Endothelial cell of umbilical vein (primary cell): ENCODE measurements at regions of chr14 and their contacts with region 1.

Region 1: GRCh38 chr14:60980811-60981632 is at the starts of genes SLC38A6 and TRMT5:
- DNase-seq: peak; percentile 98
- H3K4me3 ChIP-seq: peak within 1 kb of the TSS; percentile 27 to 72 (median 61)
- H3K27ac ChIP-seq: peak within 1 kb of the TSS; percentile 83
- H3K4me1 ChIP-seq: peaks cover 46% of the 10 kb centered on the region
- H3K27me3 ChIP-seq: no peaks in the 10 kb centered on the region
- CTCF ChIP-seq: no peak
- POLR2A ChIP-seq: peak; percentile 51
- total RNA-seq, gene SLC38A6: 21.6 and 24.6 TPM in 2 replicates
- total RNA-seq, gene TRMT5: 12.6 and 13.5 TPM in 2 replicates

Region 2: DNA sequence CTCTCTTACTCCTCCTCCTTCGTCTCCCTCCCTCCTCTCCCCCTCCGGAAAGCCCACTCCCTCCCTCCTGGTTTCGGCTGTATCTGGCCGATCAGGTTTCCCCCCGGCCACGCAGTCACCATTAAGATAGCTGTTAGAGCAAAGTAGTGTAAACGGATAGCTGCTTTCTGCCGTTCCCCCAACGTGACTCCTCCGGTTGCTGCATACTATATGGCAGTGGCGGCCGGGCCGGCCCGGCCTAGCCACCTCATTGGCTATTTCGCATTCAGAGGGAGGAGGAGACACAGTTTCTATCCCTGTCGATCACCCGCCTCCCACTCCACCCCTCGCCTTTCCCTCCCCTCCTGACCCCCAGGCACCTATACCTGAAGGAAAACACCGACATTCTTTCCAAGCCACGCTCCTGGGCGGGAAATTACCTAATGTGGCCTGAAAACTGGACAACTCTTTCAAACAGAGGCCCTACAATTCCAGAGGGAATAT is 256.8 kb before region 1 on chr14 and contains the start of gene SIX4:
- CTCF ChIA-PET with region 1: interaction called, 4 read pairs
- POLR2A ChIA-PET with region 1: interaction called, 4 read pairs
- dilution Hi-C with region 1: no loop called
- intact Hi-C with region 1: loop called (anchors 1 kb)
- DNase-seq: peak; percentile 85
- H3K4me3 ChIP-seq: peak within 1 kb of the TSS; percentile 81 to 94 (median 86)
- H3K27ac ChIP-seq: peak within 1 kb of the TSS; percentile 57
- H3K4me1 ChIP-seq: peaks cover 8% of the 10 kb centered on the region
- H3K27me3 ChIP-seq: peaks cover 9 to 16% of the 10 kb centered on the region in 2 experiments
- CTCF ChIP-seq: no peak
- POLR2A ChIP-seq: peak; percentile 75
- total RNA-seq, gene SIX4: 4.7 and 7.5 TPM in 2 replicates

Region 3: GRCh38 chr14:60805841-60806569 is 175.0 kb before region 1 on chr14:
- CTCF ChIA-PET with region 1: no interaction called
- POLR2A ChIA-PET with region 1: no interaction called
- dilution Hi-C with region 1: no loop called
- intact Hi-C with region 1: loop called (anchors 5 kb)
- DNase-seq: peak; percentile 9
- H3K4me3 ChIP-seq: no peak overlapping the region
- H3K27ac ChIP-seq: no peak overlapping the region
- H3K4me1 ChIP-seq: peaks cover 8% of the 10 kb centered on the region
- H3K27me3 ChIP-seq: no peaks in the 10 kb centered on the region
- CTCF ChIP-seq: no peak
- POLR2A ChIP-seq: no peak

Region 4: GRCh38 chr14:61103481-61104339 is 122.7 kb after region 1 on chr14:
- CTCF ChIA-PET with region 1: interaction called, 3 read pairs
- POLR2A ChIA-PET with region 1: interaction called, 5 read pairs
- dilution Hi-C with region 1: no loop called
- intact Hi-C with region 1: loop called (anchors 2 kb)
- DNase-seq: peak; percentile 94
- H3K4me3 ChIP-seq: peak overlapping the region in 1 of 3 experiments; percentile 17
- H3K27ac ChIP-seq: peak overlapping the region; percentile 100
- H3K4me1 ChIP-seq: peaks cover 66% of the 10 kb centered on the region
- H3K27me3 ChIP-seq: no peaks in the 10 kb centered on the region
- CTCF ChIP-seq: no peak
- POLR2A ChIP-seq: peak; percentile 52

Region 5: DNA sequence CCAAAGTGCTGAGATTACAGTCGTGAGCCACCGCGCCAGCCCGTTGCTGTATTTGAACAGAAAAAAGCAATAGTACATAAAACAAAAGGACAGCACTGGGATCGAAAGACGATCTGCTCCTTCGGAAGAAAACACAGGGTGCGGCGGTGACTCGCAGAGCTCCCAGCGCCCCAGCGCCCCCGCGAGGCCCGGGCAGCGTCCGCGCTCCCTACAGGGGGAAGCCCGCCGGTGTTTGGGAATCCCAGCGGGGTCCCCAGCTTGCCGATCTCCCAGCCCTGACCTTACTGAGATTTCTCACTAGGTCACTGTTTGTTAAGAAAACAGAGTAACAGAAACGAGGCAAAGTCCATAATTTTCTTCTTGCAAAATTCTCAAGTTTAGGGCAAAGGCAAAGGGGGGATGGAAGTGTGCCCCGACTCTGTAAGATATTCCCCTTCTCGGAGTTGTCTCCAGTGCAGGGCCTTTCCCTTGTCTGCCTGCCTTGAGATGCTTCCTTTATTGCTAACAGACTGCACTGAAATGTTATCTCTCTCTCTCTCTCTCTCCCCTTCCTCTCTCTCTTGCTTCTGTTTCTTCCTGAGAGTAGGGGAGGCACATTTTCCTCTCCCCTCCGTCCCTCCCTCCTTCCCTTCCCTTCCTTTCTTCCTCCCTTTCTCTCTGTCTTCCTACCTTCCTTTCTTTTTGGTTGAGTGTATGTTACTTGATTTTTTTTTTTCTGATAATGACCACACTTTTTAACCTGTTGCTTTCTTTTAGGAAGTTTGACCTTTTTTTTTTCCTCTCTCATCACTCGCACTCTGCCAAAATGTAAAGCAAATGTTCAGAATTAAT is 208.2 kb after region 1 on chr14:
- CTCF ChIA-PET with region 1: interaction called, 5 read pairs
- POLR2A ChIA-PET with region 1: interaction called, 4 read pairs
- dilution Hi-C with region 1: no loop called
- intact Hi-C with region 1: loop called (anchors 2 kb)
- DNase-seq: peak; percentile 70
- H3K4me3 ChIP-seq: peak overlapping the region; percentile 9 to 50 (median 32)
- H3K27ac ChIP-seq: peak overlapping the region; percentile 44
- H3K4me1 ChIP-seq: peaks cover 44% of the 10 kb centered on the region
- H3K27me3 ChIP-seq: no peaks in the 10 kb centered on the region
- CTCF ChIP-seq: peak; percentile 70 to 85
- POLR2A ChIP-seq: no peak